ENCODE measurements at regions of chr19 and their contacts with region 1.

Region 1: DNA sequence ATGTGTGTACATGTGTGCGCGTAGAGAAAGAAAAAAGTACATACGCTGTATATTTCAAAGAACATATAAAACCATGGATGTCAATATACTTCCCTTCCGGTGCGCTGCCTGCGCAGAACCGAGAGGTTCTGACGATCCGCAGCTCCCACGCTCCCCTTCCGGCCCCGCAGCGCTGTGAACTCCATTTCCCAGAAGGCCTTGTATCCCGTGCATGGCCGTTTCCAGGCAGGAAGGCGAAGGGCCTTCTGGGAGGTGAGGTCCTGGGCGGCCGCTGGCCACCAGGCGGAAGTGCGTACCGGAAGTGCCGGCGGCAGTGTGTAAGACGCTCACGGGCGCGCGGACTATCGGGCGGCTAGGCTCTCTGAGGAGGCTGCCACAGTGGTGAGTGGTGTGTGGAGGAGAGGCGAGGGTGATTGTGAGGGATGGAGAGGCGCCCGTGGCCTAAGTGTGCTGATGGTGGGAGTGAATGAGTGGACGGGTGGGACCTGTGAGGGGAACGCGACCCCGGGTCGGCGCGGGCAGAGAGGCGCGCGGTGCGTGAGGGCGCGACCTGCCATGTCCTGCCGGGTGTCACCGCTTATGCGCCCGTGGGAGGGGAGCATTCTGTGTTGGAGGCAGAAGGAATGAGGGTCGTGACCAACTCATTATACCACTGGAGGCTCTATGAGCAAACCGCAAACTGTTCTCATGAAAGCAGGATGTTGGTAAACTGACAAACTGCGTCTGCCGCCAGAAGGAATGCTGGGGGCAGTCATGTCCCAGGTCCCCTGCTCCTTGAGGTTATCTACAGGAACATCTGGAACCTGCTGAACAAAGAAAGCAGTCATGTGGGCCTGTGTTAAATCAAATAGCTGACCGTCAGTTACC is at the start of gene ERVK3-1:
- DNase-seq: peak; percentile 88 to 98
- H3K4me3 ChIP-seq: peak within 1 kb of the TSS; percentile 77 to 87
- H3K27ac ChIP-seq: peak within 1 kb of the TSS; percentile 84 to 91
- H3K4me1 ChIP-seq: peaks cover 0 to 7% of the 10 kb centered on the region in 2 donors
- H3K27me3 ChIP-seq: no peaks in the 10 kb centered on the region
- CTCF ChIP-seq: peak in 1 of 3 experiments; percentile 48
- total RNA-seq, gene ERVK3-1: 35.0 TPM

Region 2: GRCh38 chr19:56838909-56839651 is 1466.2 kb before region 1 on chr19:
- intact Hi-C with region 1: loop called (anchors 5 kb)
- DNase-seq: peak; percentile 94 to 98
- H3K4me3 ChIP-seq: peak overlapping the region; percentile 57 to 70
- H3K27ac ChIP-seq: peak overlapping the region; percentile 86 to 95
- H3K4me1 ChIP-seq: no peaks in the 10 kb centered on the region
- H3K27me3 ChIP-seq: no peaks in the 10 kb centered on the region
- CTCF ChIP-seq: no peak

Region 3: GRCh38 chr19:58182989-58183816 is 122.1 kb before region 1 on chr19 and contains the start of gene ZNF274:
- intact Hi-C with region 1: loop called (anchors 10 kb)
- DNase-seq: peak; percentile 71 to 94
- H3K4me3 ChIP-seq: peak within 1 kb of the TSS; percentile 84 to 93
- H3K27ac ChIP-seq: peak within 1 kb of the TSS; percentile 99
- H3K4me1 ChIP-seq: no peaks in the 10 kb centered on the region
- H3K27me3 ChIP-seq: no peaks in the 10 kb centered on the region
- CTCF ChIP-seq: no peak
- total RNA-seq, gene ZNF274: 14.7 TPM

Region 4: GRCh38 chr19:58326914-58327726 is 21.8 kb after region 1 on chr19 and contains the start of gene ZSCAN22:
- intact Hi-C with region 1: loop called (anchors 1 kb)
- DNase-seq: peak; percentile 78 to 98
- H3K4me3 ChIP-seq: peak within 1 kb of the TSS; percentile 91 to 92
- H3K27ac ChIP-seq: peak within 1 kb of the TSS; percentile 91 to 96
- H3K4me1 ChIP-seq: peaks cover 4 to 13% of the 10 kb centered on the region in 2 donors
- H3K27me3 ChIP-seq: no peaks in the 10 kb centered on the region
- CTCF ChIP-seq: no peak
- total RNA-seq, gene ZSCAN22: 1.9 TPM

Region 5: DNA sequence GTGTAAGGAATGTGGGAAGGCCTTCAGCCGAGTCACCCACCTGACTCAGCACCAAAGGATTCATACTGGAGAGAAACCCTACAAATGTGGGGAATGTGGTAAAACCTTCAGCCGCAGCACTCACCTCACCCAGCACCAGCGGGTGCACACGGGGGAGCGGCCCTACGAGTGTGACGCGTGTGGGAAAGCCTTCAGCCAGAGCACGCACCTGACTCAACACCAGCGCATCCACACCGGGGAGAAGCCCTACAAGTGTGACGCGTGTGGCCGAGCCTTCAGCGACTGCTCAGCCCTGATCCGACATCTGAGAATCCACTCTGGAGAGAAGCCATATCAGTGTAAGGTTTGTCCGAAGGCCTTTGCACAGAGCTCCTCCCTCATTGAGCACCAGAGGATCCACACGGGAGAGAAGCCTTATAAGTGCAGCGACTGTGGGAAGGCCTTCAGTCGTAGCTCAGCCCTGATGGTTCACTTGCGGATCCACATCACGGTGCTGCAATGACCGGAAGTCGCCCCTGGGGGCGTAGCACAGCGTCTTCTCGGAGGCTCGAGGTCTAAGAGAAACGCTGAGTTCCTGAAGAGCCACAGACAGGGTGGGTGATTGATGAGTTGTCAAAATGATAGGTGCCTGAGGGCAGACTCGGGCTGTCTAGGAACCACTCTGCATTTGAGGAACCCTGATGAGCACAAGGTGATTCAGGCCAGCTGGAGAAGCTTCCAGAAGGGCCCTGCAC is 33.7 kb after region 1 on chr19:
- intact Hi-C with region 1: no loop called
- DNase-seq: no peak
- H3K4me3 ChIP-seq: no peak overlapping the region
- H3K27ac ChIP-seq: no peak overlapping the region
- H3K4me1 ChIP-seq: no peaks in the 10 kb centered on the region
- H3K27me3 ChIP-seq: no peaks in the 10 kb centered on the region
- CTCF ChIP-seq: no peak

Region 6: DNA sequence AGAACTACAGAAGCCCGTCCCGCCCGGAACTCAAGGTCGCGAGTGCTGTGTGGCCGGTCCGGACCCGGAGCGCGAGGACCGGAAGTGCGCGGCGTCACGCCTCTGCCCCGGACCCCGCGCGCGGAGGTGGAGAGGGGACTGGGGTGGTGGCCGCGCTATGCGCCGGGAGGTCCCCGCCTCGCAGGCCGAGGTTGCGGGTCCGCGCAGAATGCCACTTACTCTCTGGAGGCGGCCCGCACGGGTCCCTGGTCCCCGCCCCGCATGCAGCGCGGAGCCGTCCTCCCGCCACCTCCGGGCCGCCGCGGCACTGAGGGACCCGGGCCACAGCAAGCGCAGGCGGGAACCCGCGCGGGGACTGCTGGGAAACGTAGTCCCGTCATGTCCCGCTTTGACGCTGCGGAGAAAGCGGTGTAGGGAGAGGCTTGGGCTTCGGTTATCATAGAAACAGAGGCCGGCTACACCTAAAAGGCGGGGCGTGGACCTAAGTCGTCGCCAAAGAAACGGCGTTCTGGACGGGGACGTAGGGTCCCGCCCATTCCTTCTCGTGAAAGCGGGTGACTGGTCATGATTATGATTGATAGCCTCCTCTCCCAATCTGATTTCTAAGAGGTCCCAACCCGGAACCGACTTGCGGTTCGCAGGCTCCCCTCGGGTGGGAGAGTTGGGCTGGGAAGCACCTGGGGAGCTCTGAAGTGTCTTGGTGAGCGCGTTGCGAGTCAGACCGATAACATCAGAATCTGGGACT is 75.6 kb after region 1 on chr19 and contains the start of gene ZNF837:
- intact Hi-C with region 1: loop called (anchors 1 kb)
- DNase-seq: peak; percentile 99
- H3K4me3 ChIP-seq: peak within 1 kb of the TSS; percentile 82 to 86
- H3K27ac ChIP-seq: peak within 1 kb of the TSS; percentile 84 to 91
- H3K4me1 ChIP-seq: peaks cover 8 to 24% of the 10 kb centered on the region in 2 donors
- H3K27me3 ChIP-seq: no peaks in the 10 kb centered on the region
- CTCF ChIP-seq: no peak
- total RNA-seq, gene ZNF837: not detected

Region 7: DNA sequence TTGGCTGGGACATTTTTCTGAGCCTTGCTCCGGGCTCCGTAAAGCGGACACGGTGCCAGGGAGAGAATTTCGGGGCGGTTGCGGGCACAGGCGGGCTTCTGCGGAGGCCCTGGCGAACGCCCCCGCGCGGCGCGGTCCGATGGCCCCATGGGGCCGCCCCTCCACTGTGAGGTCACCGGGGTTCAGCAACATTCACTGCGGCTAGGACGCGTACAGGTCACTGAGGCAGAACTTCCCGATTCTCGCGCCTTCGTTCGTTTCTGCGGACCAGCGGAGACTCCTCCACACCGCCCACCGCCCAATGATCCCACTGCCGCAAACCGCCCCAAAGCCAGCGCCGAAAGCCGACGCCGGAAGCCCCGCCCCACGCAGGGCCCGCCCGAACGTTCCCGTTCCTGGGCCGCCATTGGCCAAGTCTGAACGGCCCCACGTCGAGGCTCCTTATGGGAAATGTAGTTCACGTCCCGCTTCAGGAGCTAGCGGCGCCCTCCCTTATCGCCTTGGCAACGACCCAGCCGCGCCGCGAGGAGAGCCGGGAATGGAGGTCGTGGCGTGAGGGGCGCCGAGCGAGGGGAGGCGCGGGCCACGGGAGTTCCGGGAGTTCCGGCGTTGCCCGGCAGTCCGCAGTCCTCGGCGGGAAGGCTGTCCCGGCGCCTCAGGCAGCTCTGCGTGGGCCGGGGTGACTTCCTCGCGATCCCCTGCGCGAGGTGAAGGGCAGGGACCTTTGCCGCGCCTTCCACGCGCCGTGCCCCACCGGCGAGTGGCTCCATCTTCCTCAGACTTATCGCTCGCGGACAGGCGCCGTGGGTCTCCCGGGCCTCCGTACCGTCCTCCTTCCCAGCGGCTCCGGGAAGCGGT is 103.1 kb after region 1 on chr19 and contains the start of gene ZNF584:
- intact Hi-C with region 1: no loop called
- DNase-seq: peak; percentile 76 to 97
- H3K4me3 ChIP-seq: peak within 1 kb of the TSS; percentile 97
- H3K27ac ChIP-seq: peak within 1 kb of the TSS; percentile 86 to 93
- H3K4me1 ChIP-seq: peaks cover 3 to 16% of the 10 kb centered on the region in 2 donors
- H3K27me3 ChIP-seq: no peaks in the 10 kb centered on the region
- CTCF ChIP-seq: no peak
- total RNA-seq, gene ZNF584: 17.9 TPM